ENCODE measurements at regions of chr17 and their contacts with region 1.

Region 1: GRCh38 chr17:7561028-7561575 is 617 bp upstream of the SENP3 start:
- DNase-seq: peak; percentile 88
- H3K4me3 Mint-ChIP-seq: peak overlapping the region; percentile 86
- H3K27ac Mint-ChIP-seq: peak overlapping the region; percentile 92
- H3K4me1 Mint-ChIP-seq: peaks cover 67% of the 10 kb centered on the region
- H3K27me3 Mint-ChIP-seq: no peaks in the 10 kb centered on the region

Region 2: DNA sequence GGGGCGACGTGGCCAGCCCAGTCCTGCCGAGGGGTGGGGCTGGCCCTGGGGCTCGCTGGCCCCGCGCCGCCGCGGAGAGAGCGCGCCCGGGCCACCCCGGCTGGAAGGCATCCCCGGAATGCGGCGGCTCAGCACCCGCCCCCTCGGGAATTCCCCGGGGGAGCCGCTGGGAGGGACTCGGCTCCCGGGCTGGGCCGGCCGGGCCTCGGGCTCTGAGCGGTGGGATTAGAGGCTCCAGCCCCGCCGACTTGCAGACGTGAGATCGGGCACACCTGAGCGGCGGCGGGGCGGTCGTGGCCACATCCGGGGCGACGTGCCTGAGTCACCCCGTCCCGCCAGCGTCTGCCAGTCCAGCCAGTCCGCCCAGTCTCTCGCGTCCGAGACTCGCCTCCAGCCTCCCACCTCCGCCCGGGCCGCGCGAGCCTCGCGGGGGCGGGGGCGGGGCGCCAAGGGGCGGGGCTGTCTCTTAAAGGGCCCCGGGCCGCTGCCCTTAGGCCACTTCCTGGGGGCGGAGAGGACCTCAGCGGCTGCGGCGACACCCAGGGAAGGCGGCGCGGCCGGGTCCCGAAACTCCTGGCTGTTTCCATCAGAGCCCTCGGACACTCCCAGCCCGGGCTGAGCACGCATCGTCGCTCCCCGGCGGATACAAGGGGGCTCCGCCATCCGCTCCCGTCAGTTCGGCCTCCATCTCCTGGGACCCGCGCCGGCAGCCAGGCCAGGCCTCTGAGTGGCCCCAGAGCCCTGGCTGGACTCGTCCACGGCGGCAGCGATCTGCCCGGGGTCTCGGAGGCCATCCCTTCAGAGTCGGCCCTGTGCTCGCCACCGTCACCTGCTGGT is 209.2 kb before region 1 on chr17 and contains the start of gene KCTD11:
- CTCF ChIA-PET with region 1: interaction called, 24 read pairs
- DNase-seq: peak; percentile 83
- H3K4me3 Mint-ChIP-seq: peak within 1 kb of the TSS; percentile 74
- H3K27ac Mint-ChIP-seq: peak within 1 kb of the TSS; percentile 76
- H3K4me1 Mint-ChIP-seq: peaks cover 68% of the 10 kb centered on the region
- H3K27me3 Mint-ChIP-seq: peaks cover 14% of the 10 kb centered on the region

Region 3: GRCh38 chr17:7440113-7440833 is 120.8 kb before region 1 on chr17:
- CTCF ChIA-PET with region 1: interaction called, 16 read pairs
- DNase-seq: peak; percentile 64
- H3K4me3 Mint-ChIP-seq: peak overlapping the region; percentile 87
- H3K27ac Mint-ChIP-seq: no peak overlapping the region
- H3K4me1 Mint-ChIP-seq: peaks cover 55% of the 10 kb centered on the region
- H3K27me3 Mint-ChIP-seq: peaks cover 77% of the 10 kb centered on the region

Region 4: DNA sequence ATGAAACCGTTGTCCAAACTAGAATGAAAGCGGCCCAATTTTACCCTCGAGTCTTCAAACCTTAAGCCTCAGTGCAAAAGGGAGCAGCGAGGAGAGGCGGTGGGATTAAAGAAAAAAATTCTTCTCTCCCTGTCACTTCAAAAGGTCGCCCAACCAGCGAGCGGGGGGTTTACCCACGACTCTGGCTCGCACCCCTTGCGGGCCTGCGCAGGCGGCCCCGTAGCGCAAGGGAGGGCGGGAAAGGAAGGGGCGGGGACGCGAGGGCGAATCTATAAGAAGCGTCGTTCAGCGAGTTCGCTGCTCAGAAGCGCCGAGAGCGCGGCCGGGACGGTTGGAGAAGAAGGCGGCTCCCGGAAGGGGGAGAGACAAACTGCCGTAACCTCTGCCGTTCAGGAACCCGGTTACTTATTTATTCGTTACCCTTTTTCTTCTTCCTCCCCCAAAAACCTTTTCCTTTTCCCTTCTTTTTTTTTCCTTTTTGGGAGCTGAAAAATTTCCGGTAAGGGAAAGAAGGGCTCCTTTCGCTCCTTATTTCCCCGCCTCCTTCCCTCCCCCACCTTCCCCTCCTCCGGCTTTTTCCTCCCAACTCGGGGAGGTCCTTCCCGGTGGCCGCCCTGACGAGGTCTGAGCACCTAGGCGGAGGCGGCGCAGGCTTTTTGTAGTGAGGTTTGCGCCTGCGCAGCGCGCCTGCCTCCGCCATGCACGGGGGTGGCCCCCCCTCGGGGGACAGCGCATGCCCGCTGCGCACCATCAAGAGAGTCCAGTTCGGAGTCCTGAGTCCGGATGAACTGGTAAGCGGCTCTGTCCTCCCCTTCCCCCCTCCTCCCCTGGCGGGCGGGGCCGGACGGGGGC is 76.8 kb before region 1 on chr17 and contains the start of gene POLR2A:
- CTCF ChIA-PET with region 1: interaction called, 13 read pairs
- DNase-seq: peak; percentile 96
- H3K4me3 Mint-ChIP-seq: peak within 1 kb of the TSS; percentile 99
- H3K27ac Mint-ChIP-seq: peak within 1 kb of the TSS; percentile 100
- H3K4me1 Mint-ChIP-seq: peaks cover 75% of the 10 kb centered on the region
- H3K27me3 Mint-ChIP-seq: no peaks in the 10 kb centered on the region

Region 5: GRCh38 chr17:7515911-7516610 is 45.0 kb before region 1 on chr17:
- CTCF ChIA-PET with region 1: interaction called, 157 read pairs
- DNase-seq: no peak
- H3K4me3 Mint-ChIP-seq: no peak overlapping the region
- H3K27ac Mint-ChIP-seq: no peak overlapping the region
- H3K4me1 Mint-ChIP-seq: peaks cover 2% of the 10 kb centered on the region
- H3K27me3 Mint-ChIP-seq: no peaks in the 10 kb centered on the region

Region 6: DNA sequence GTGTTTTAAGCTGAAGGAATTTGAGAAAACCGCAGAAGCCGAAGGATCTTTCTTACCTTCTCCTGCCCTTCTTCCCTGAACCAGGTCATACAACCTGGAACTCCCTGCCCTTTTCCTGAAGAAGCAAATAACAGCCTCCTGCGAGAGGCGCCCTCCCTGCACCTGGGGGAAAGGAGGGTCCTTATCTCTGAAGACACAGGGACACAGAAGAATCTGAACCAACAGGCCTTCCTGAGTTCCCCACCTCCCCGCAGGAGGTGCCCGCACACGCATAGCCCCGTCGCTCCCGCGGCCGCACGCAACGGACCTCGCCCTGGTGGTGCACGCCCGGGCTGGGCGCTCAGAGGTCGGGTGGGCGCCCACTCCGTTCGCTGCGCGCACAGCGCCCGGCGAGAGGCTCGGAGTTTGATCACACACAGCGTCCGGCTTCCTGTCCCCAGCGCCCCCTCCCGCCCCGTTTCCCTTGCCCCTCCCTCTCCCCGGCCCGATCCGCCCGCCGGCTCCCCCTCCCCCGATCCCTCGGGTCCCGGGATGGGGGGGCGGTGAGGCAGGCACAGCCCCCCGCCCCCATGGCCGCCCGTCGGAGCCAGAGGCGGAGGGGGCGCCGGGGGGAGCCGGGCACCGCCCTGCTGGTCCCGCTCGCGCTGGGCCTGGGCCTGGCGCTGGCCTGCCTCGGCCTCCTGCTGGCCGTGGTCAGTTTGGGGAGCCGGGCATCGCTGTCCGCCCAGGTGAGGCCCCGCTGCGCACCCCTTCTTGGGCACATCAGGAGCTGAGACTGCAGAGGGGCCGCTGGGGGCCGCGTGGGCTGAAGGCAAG is 12.3 kb before region 1 on chr17 and contains the start of gene TNFSF12:
- CTCF ChIA-PET with region 1: interaction called, 26 read pairs
- DNase-seq: peak; percentile 82
- H3K4me3 Mint-ChIP-seq: peak within 1 kb of the TSS; percentile 93
- H3K27ac Mint-ChIP-seq: peak within 1 kb of the TSS; percentile 90
- H3K4me1 Mint-ChIP-seq: peaks cover 59% of the 10 kb centered on the region
- H3K27me3 Mint-ChIP-seq: no peaks in the 10 kb centered on the region

Region 7: DNA sequence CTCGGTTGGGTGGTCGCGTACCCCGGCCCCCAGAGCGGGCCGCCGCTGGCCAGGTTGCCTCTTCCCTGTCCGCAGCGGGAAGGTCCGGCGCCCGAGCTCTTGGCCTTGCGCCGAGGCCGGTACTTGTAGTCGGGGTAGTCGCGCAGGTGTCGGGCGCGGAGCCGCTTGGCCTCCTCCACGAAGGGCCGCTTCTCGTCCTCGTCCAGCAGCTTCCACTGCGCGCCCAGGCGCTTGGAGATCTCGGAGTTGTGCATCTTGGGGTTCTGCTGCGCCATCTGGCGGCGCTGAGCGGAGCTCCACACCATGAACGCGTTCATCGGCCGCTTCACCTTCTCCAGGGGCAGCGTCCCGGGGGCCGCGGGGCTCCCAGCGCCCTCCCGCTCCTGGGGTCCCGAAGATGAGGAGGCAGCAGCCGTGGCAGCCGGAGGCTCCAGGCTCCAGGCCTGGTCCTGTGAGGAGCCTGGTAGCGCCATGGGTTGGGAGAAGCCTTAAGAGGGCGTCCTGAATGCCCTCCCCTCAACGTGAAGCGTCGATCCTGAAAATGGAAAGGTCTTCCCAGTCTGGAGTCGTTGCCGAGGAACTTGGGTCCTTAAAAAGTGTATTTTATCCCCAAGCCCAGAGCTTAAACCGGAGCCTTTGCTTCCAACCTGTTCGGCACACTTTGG is 28.2 kb after region 1 on chr17:
- CTCF ChIA-PET with region 1: interaction called, 15 read pairs
- DNase-seq: peak; percentile 80
- H3K4me3 Mint-ChIP-seq: no peak overlapping the region
- H3K27ac Mint-ChIP-seq: no peak overlapping the region
- H3K4me1 Mint-ChIP-seq: peaks cover 22% of the 10 kb centered on the region
- H3K27me3 Mint-ChIP-seq: no peaks in the 10 kb centered on the region

Measured in activated naive CD4-positive, alpha-beta T cell treated with anti-CD3 and anti-CD28 coated beads, Interleukin-2, amount 10 ng/mL, durations not matched to agents 7 days and 5 days (primary cell).